Right cardiac atrium (tissue), 5 donors: ENCODE measurements at regions of chr9 and their contacts with region 1.

Region 1: GRCh38 chr9:112061152-112061740 is 113.9 kb downstream of the SUSD1 start:
- DNase-seq: peak; percentile 59 to 80 (median 70)
- ATAC-seq: peak; percentile 84 to 88
- H3K4me3 ChIP-seq: no peak overlapping the region
- H3K27ac ChIP-seq: peak overlapping the region; percentile 55
- H3K4me1 ChIP-seq: peaks cover 11% of the 10 kb centered on the region
- H3K27me3 ChIP-seq: no peaks in the 10 kb centered on the region

Region 2: DNA sequence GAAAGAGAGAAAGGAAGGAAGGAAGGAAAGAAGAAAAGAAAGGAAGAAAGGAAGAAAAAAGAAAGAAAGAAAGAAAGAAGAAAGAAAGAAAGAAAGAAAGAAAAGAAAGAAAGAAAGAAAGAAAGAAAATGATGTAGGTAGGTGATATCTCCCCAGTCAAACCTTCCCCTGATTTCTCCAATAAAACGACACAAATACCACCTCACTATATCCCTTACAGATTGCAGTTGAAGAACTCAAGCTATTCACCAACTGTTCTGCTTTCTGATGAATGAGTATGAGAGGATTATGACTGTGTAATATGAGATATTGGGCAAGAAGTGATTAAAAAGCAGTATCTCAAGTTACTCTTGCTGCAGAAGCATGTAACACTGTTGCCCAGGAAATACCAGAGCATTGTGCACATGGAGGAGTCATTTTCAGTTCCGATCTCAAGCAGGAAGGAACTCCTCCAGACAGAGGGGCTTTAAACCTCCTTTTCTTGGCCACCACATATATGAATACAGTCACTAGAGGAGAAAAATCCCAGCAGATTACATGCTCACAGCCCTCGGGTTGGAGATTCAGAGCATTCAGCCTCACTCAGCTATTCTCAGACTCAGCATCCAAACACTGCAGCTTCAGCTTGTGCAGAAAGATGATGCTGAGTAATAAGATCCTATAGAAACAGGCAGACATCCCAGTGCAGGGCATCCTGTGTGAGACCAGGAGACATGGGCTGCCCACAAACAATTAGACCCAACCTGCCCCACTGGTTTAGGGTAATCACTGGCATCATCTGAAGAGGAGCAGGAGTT is 103.2 kb before region 1 on chr9:
- intact Hi-C with region 1: loop called in 1 of 4 experiments (anchors 10 kb)
- DNase-seq: no peak
- ATAC-seq: peak; percentile 85
- H3K4me3 ChIP-seq: no peak overlapping the region
- H3K27ac ChIP-seq: no peak overlapping the region
- H3K4me1 ChIP-seq: no peaks in the 10 kb centered on the region
- H3K27me3 ChIP-seq: no peaks in the 10 kb centered on the region